ENCODE measurements at regions of chr15 and their contacts with region 1.

Region 1: DNA sequence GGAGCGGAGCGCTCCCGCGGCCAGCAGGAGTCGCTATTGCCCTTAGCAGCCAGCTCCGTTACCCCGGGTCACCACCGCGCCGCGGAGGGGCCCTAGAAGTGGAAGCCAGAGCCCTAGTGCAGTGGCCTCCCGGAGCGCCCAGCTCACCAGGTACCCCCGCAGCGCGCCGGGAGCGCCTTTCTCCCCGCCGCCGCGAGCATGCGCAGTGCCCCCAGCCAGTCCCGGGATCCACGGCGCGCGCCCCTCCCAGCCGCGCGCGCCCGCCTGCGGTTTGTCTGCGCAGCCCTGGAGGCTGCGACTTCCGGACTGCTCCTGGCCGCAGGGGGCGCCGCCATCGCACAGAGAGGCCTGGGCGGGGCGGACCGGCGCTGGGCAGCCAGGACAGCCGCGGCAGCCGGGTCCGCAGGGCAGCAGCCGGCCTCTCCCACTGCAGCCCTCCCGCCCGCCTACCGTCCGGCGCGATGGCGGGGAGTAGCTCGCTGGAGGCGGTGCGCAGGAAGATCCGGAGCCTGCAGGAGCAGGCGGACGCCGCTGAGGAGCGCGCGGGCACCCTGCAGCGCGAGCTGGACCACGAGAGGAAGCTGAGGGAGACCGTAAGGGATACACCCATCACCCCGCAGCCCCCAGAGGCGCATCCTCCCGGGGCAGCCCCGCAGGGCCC is 5.7 kb downstream of the TPM1 start:
- DNase-seq: peak; percentile 93
- ATAC-seq: peak; percentile 93
- H3K4me3 ChIP-seq: peak overlapping the region; percentile 67 to 86 (median 80)
- H3K27ac ChIP-seq: peak overlapping the region; percentile 67
- H3K4me1 ChIP-seq: peaks cover 82% of the 10 kb centered on the region
- H3K27me3 ChIP-seq: no peaks in the 10 kb centered on the region
- CTCF ChIP-seq: peak; percentile 91
- EP300 ChIP-seq: no peak; a peak in 2 of 4 replicates
- POLR2A ChIP-seq: peak; percentile 46 to 78
- RAD21 ChIP-seq: peak; percentile 100

Region 2: DNA sequence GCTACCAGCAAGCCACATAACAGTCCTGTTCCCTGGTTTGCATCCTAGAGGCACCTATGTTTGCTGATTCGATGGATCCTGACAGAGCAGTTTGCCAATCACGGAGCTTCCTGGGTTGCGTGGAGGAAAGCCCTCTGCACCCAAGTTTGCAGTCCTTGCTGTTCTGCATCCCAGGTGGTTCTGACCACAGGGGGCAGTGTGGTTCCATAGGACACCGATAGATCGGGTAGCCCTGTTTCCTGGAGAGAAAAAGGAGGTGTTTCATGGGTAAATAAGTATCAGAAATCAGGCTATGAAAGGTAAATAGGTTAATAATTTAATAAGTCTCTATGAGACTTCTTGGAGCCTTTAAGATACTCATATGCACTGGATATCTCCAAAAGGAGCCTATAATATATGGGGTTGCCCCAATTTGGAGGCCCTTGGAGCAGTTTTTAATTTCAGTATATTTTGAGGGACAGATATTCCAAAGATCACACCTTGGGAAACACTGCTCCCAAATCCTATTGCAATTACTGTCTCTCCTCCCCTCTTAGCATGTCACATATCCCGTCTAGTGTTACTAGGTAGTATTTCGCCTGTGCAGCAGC is 200.2 kb before region 1 on chr15:
- CTCF ChIA-PET with region 1: interaction called, 3 read pairs
- POLR2A ChIA-PET with region 1: interaction called, 4 read pairs
- in situ Hi-C with region 1: loop called (anchors 5 kb)
- intact Hi-C with region 1: loop called (anchors 2 kb)
- DNase-seq: peak; percentile 44
- ATAC-seq: peak; percentile 52
- H3K4me3 ChIP-seq: no peak overlapping the region
- H3K27ac ChIP-seq: peak overlapping the region; percentile 43
- H3K4me1 ChIP-seq: peaks cover 74% of the 10 kb centered on the region
- H3K27me3 ChIP-seq: no peaks in the 10 kb centered on the region
- CTCF ChIP-seq: peak; percentile 83
- EP300 ChIP-seq: no peak
- POLR2A ChIP-seq: no peak
- RAD21 ChIP-seq: peak; percentile 65

Region 3: DNA sequence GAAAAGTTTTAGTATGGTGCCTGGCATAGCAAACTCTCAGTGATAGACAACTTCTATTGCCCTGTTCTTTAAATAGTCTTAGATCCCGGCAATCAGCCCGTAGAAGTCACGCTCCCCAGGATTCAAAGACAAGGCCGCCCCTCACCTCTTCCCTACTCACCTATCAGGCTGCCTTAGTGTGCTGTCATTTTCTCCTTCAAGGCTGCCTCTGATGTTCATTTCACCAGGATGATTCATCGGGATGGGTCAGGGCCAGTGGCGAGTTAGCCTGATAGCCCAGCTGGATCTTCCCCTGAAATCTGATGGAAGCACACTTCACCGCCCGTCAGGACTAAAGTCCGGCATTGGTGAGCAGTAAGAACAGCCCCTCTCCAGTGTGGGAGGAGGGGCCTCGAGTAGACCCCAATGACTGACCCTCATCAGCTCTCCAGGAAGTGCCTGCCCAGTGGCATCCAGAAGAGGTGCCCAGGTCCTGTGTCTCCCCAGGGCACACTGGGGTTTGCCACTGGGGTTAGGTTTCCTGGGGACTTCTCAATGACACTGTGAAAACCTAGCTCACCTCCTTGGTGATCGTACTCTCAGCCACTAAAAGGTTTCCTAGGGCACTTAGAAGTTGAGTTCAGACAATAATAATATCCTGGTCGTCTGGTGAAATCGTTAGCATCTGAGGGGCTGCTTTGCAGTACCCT is 31.8 kb after region 1 on chr15:
- CTCF ChIA-PET with region 1: no interaction called
- POLR2A ChIA-PET with region 1: interaction called, 32 read pairs
- in situ Hi-C with region 1: no loop called
- intact Hi-C with region 1: no loop called
- DNase-seq: peak; percentile 62
- ATAC-seq: peak; percentile 62
- H3K4me3 ChIP-seq: peak overlapping the region in 1 of 3 experiments; percentile 32; a peak in 2 of 6 replicates
- H3K27ac ChIP-seq: peak overlapping the region; percentile 38
- H3K4me1 ChIP-seq: peaks cover 56% of the 10 kb centered on the region
- H3K27me3 ChIP-seq: no peaks in the 10 kb centered on the region
- CTCF ChIP-seq: no peak
- EP300 ChIP-seq: no peak
- POLR2A ChIP-seq: no peak
- RAD21 ChIP-seq: no peak

Region 4: GRCh38 chr15:63122002-63122893 is 74.0 kb after region 1 on chr15:
- CTCF ChIA-PET with region 1: no interaction called
- POLR2A ChIA-PET with region 1: interaction called, 11 read pairs
- in situ Hi-C with region 1: no loop called
- intact Hi-C with region 1: no loop called
- DNase-seq: peak; percentile 73
- ATAC-seq: peak; percentile 96
- H3K4me3 ChIP-seq: peak overlapping the region; percentile 86 to 94 (median 94)
- H3K27ac ChIP-seq: peak overlapping the region; percentile 85
- H3K4me1 ChIP-seq: peaks cover 32% of the 10 kb centered on the region
- H3K27me3 ChIP-seq: no peaks in the 10 kb centered on the region
- CTCF ChIP-seq: peak; percentile 67
- EP300 ChIP-seq: no peak
- POLR2A ChIP-seq: peak; percentile 19 to 49; a peak in 3 of 4 replicates
- RAD21 ChIP-seq: no peak

Region 5: DNA sequence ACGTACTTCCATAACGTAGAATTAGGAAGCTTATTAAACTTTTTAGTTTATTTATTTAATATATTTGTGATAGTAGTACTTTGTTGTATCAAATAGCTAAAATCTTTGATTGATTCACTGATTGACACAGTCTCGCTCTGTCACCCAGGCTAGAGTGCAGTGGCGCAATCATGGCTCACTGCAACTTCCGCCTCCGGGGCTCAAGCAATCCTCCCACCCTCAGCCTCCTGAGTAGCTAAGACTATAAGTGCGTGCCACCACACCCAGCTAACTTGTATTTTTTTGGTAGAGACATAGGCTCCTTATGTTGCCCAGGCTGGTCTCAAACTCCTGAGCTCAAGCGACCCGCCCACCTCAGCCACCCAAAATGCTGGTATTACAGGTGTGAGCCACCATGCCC is 234.9 kb after region 1 on chr15:
- CTCF ChIA-PET with region 1: no interaction called
- POLR2A ChIA-PET with region 1: no interaction called
- in situ Hi-C with region 1: no loop called
- intact Hi-C with region 1: loop called (anchors 5 kb)
- DNase-seq: no peak
- ATAC-seq: no peak
- H3K4me3 ChIP-seq: no peak overlapping the region
- H3K27ac ChIP-seq: no peak overlapping the region
- H3K4me1 ChIP-seq: no peaks in the 10 kb centered on the region
- H3K27me3 ChIP-seq: no peaks in the 10 kb centered on the region
- CTCF ChIP-seq: no peak
- EP300 ChIP-seq: no peak
- POLR2A ChIP-seq: no peak
- RAD21 ChIP-seq: no peak